Colonic mucosa (tissue), 4 donors: ENCODE measurements at regions of chr9 and their contacts with region 1.

Region 1: DNA sequence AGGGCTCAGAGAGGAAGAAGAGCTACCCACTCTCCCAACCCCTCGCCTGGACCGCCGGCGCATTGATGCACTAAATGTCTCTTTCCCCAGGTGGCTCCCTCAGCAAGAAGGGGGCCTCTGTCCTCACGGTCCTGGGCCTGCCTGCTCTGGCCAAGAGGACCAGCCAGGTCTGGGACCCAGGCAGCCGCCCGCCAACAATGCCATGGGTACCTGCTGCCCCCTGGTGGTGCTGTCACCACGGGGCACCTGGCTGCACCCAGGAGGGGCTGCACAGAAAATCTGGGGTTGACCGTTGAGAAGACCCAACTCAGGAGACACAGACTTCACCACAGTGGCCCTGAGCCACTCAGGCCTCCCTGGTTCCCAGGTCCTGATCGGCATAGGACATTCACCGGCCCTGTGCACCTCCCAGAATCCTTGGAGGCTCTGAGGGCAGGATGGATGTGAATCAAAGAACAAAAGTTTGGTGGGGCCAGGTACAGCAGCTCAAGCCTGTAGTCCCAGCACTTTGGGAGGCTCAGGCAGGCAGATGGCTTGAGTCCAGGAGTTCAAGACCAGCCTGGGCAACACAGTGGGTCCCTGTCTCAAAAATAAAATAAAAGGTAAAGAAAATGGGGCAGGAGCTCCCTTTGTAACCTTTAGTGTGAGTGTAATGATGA is 2.4 kb upstream of the VAV2 start:
- DNase-seq: peak; percentile 87
- H3K4me3 ChIP-seq: no peak overlapping the region
- H3K27ac ChIP-seq: no peak overlapping the region
- H3K4me1 ChIP-seq: peaks cover 8% of the 10 kb centered on the region
- H3K27me3 ChIP-seq: no peaks in the 10 kb centered on the region
- CTCF ChIP-seq: peak; percentile 97

Region 2: GRCh38 chr9:133782157-133783130 is 212.0 kb before region 1 on chr9:
- intact Hi-C with region 1: loop called (anchors 5 kb)
- DNase-seq: peak; percentile 75
- H3K4me3 ChIP-seq: no peak overlapping the region
- H3K27ac ChIP-seq: no peak overlapping the region
- H3K4me1 ChIP-seq: no peaks in the 10 kb centered on the region
- H3K27me3 ChIP-seq: no peaks in the 10 kb centered on the region
- CTCF ChIP-seq: peak; percentile 68

Region 3: DNA sequence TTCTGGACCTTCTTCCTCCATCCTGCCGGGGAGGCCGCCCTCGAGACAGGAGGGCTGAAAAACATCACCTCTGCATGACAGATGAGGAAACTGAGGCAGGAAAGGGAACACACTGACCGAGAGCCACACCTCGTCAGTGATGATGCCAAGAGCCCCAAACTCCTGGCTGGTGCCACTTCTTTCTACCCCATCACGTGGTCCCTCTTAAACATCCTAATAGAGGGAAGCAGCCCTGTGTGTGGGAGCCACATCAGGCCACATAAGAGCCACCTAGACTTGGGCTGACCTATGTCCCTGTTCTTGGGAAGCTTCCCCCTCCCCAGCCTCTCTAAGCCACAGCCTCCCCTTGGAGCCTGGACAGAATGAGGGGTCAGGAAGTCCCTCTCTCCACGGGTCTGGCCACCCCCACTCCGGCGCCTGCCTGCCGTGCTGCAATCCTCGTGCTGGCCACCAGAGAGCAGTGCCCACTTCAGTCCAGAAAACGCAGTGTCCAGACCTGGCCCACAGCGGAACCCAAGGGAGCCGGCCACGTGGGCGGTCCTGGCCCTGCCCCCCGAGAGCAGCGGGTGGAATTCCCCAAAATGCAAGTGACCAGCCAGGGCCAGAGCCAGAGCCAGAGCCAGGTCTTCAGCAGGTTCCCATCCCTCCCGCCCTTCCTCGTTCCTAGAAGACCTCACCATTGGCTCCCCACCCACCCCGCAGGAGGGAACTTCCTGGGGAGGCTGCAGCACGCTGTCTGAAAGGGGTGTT is 201.6 kb before region 1 on chr9:
- intact Hi-C with region 1: loop called (anchors 2 kb)
- DNase-seq: peak; percentile 72
- H3K4me3 ChIP-seq: no peak overlapping the region
- H3K27ac ChIP-seq: no peak overlapping the region
- H3K4me1 ChIP-seq: peaks cover 22% of the 10 kb centered on the region
- H3K27me3 ChIP-seq: no peaks in the 10 kb centered on the region
- CTCF ChIP-seq: peak; percentile 96

Region 4: GRCh38 chr9:133916159-133916541 is 78.3 kb before region 1 on chr9:
- intact Hi-C with region 1: no loop called
- DNase-seq: no peak
- H3K4me3 ChIP-seq: no peak overlapping the region
- H3K27ac ChIP-seq: no peak overlapping the region
- H3K4me1 ChIP-seq: no peaks in the 10 kb centered on the region
- H3K27me3 ChIP-seq: no peaks in the 10 kb centered on the region
- CTCF ChIP-seq: no peak

Region 5: GRCh38 chr9:134178768-134179551 is 184.5 kb after region 1 on chr9:
- intact Hi-C with region 1: no loop called
- DNase-seq: no peak
- H3K4me3 ChIP-seq: no peak overlapping the region
- H3K27ac ChIP-seq: no peak overlapping the region
- H3K4me1 ChIP-seq: no peaks in the 10 kb centered on the region
- H3K27me3 ChIP-seq: peaks cover 3% of the 10 kb centered on the region
- CTCF ChIP-seq: no peak